Thyroid gland (tissue), 4 donors: ENCODE measurements at regions of chr1 and their contacts with region 1.

Region 1: DNA sequence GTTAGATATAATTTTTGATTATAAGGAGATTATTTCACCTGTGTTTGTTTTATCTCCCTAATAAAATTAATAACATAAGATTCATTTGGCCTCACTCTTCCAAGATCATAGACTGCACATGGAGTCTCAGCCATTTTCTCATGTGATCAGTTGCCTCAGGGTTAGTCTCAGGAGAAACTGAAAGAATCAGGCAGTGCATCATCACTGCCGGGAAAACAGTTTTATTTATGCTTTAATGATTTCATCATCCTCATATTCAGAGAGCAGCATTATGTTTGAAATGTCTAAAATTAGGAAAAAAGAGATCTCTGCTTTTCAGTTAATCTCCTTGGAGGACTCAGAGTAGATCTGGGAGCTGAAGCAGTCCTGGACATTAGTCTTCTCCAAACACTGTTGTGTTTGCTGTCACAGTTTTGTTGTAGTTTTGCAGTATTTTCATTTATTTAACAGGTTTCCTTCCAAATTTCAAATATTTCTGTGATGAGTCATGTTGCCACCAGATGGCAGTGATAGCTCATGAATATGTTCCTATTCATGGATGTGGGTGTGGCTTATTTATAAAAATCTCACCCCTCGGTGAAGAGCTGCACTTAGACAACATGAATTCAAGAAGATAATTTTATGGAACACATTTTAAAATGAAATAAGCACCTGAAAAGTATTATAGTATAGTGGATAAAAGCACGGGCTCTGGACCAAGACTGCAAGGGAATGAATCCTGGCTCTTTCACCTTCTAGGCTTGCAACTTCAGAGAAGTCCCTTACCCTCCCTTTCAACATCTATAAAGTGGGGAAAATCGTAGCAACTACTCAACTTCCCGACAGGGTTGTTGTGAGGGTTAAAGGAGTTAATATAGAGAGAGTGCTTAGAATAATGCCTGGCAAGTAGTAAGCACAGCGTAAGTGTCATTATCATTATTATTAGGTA is 31.2 kb downstream of the CHD1L start:
- DNase-seq: peak in 1 of 2 donors; percentile 16
- H3K4me3 ChIP-seq: no peak overlapping the region
- H3K27ac ChIP-seq: no peak overlapping the region
- H3K4me1 ChIP-seq: peaks cover 4 to 18% of the 10 kb centered on the region in 2 donors
- H3K27me3 ChIP-seq: no peaks in the 10 kb centered on the region
- CTCF ChIP-seq: peak in 5 of 6 experiments; percentile 33 to 67 (median 63)
- POLR2A ChIP-seq: no peak

Region 2: DNA sequence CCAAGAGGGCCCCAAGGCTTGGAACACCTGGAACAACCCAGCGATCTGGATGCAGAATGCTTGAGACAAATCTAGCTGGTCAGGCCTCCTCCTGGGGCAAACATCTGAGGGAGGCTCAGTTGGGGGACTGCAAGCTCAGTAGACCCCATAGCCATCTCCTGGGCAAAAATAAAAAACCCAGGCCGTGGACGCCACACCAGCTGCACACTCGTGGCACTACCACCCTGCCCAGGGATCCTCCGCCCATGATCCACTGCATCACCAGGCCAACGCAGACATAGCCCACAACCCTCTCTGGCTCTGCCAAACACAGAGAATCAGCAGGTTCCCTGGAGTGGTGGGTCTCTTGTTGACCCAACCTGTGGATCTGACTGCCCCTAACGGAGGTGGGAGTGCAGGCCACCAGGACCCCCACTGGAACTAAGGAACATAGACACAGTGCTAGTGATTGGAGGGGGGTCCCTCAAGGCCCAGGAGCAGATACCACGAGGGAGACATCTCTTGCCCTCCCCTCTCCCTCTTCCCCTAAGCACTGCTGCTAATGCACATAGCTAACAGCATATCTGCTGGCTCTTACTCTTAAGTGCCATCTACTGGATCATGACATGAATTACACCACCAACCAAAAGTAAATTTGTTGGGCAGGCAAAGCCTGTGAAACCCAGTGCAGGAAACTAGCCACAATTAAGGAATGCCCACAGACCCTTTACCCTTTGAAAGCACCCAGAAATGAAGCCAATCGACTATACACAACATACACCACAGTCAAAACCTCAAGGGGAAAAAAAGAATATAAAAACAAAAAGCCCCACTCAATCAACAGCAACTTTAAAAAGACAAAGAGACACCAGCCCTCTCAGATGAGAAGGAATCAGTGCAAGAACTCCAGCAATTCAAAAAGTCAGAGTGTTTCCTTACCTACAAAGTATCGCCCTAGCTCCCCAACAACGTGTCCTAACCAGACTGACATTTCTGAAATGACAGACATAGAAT is 116.2 kb after region 1 on chr1:
- intact Hi-C with region 1: loop called (anchors 10 kb)
- DNase-seq: no peak
- H3K4me3 ChIP-seq: no peak overlapping the region
- H3K27ac ChIP-seq: no peak overlapping the region
- H3K4me1 ChIP-seq: no peaks in the 10 kb centered on the region
- H3K27me3 ChIP-seq: no peaks in the 10 kb centered on the region
- CTCF ChIP-seq: peak; percentile 40 to 77 (median 58)
- POLR2A ChIP-seq: no peak